Caco-2 (cell line): ENCODE measurements at regions of chr11 and their contacts with region 1.

Region 1: GRCh38 chr11:85854557-85855340 is 434 bp upstream of the CCDC83 start:
- DNase-seq: peak; percentile 97 to 99
- H3K4me3 ChIP-seq: peak overlapping the region; percentile 75
- H3K4me3 Mint-ChIP-seq: peak overlapping the region; percentile 83
- H3K27ac Mint-ChIP-seq: peak overlapping the region; percentile 87
- H3K4me1 ChIP-seq: peaks cover 5% of the 10 kb centered on the region
- H3K4me1 Mint-ChIP-seq: peaks cover 16% of the 10 kb centered on the region
- H3K27me3 ChIP-seq: no peaks in the 10 kb centered on the region
- H3K27me3 Mint-ChIP-seq: no peaks in the 10 kb centered on the region
- CTCF ChIP-seq: peak; percentile 95 to 98

Region 2: GRCh38 chr11:85540635-85541205 is 314.0 kb before region 1 on chr11:
- CTCF ChIA-PET with region 1: no interaction called
- POLR2A ChIA-PET with region 1: no interaction called
- intact Hi-C with region 1: no loop called
- DNase-seq: no peak
- H3K4me3 ChIP-seq: no peak overlapping the region
- H3K4me3 Mint-ChIP-seq: no peak overlapping the region
- H3K27ac Mint-ChIP-seq: no peak overlapping the region
- H3K4me1 ChIP-seq: no peaks in the 10 kb centered on the region
- H3K4me1 Mint-ChIP-seq: no peaks in the 10 kb centered on the region
- H3K27me3 ChIP-seq: no peaks in the 10 kb centered on the region
- H3K27me3 Mint-ChIP-seq: no peaks in the 10 kb centered on the region
- CTCF ChIP-seq: no peak

Region 3: GRCh38 chr11:85694386-85694980 is 160.3 kb before region 1 on chr11:
- CTCF ChIA-PET with region 1: no interaction called
- POLR2A ChIA-PET with region 1: no interaction called
- intact Hi-C with region 1: loop called (anchors 1 kb)
- DNase-seq: peak in 1 of 2 experiments; percentile 59
- H3K4me3 ChIP-seq: no peak overlapping the region
- H3K4me3 Mint-ChIP-seq: no peak overlapping the region
- H3K27ac Mint-ChIP-seq: no peak overlapping the region
- H3K4me1 ChIP-seq: no peaks in the 10 kb centered on the region
- H3K4me1 Mint-ChIP-seq: no peaks in the 10 kb centered on the region
- H3K27me3 ChIP-seq: no peaks in the 10 kb centered on the region
- H3K27me3 Mint-ChIP-seq: no peaks in the 10 kb centered on the region
- CTCF ChIP-seq: peak; percentile 79 to 85

Region 4: GRCh38 chr11:85930879-85931366 is 76.2 kb after region 1 on chr11:
- CTCF ChIA-PET with region 1: interaction called, 10 read pairs
- POLR2A ChIA-PET with region 1: no interaction called
- intact Hi-C with region 1: loop called (anchors 2 kb)
- DNase-seq: peak; percentile 74 to 87
- H3K4me3 ChIP-seq: no peak overlapping the region
- H3K4me3 Mint-ChIP-seq: no peak overlapping the region
- H3K27ac Mint-ChIP-seq: peak overlapping the region; percentile 46
- H3K4me1 ChIP-seq: peaks cover 31% of the 10 kb centered on the region
- H3K4me1 Mint-ChIP-seq: peaks cover 29% of the 10 kb centered on the region
- H3K27me3 ChIP-seq: no peaks in the 10 kb centered on the region
- H3K27me3 Mint-ChIP-seq: no peaks in the 10 kb centered on the region
- CTCF ChIP-seq: no peak

Region 5: DNA sequence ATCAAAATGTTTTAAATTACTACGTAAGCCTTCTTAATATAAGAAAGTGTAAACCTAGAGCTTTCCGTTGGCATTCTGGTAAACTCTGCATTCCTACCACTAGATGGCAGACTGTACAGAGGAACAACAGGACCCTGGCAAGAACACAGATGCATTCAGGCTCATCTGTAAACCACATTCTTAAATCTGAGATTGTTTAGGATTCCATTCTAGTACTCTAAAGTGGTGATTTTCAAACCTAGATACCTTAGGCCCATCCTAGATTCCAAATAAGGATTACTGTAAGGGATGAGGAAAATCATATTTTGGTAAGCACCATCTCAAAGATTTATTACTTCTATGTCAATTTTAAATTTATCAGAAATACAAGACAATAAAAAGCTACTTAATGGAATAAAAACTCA is 187.2 kb after region 1 on chr11:
- CTCF ChIA-PET with region 1: no interaction called
- POLR2A ChIA-PET with region 1: no interaction called
- intact Hi-C with region 1: loop called (anchors 1 kb)
- DNase-seq: peak; percentile 86 to 91
- H3K4me3 ChIP-seq: no peak overlapping the region
- H3K4me3 Mint-ChIP-seq: no peak overlapping the region
- H3K27ac Mint-ChIP-seq: no peak overlapping the region
- H3K4me1 ChIP-seq: peaks cover 50% of the 10 kb centered on the region
- H3K4me1 Mint-ChIP-seq: peaks cover 51% of the 10 kb centered on the region
- H3K27me3 ChIP-seq: no peaks in the 10 kb centered on the region
- H3K27me3 Mint-ChIP-seq: no peaks in the 10 kb centered on the region
- CTCF ChIP-seq: peak; percentile 97 to 99

Region 6: GRCh38 chr11:86193297-86194095 is 338.7 kb after region 1 on chr11:
- CTCF ChIA-PET with region 1: interaction called, 15 read pairs
- POLR2A ChIA-PET with region 1: no interaction called
- intact Hi-C with region 1: loop called (anchors 1 kb)
- DNase-seq: peak; percentile 84 to 86
- H3K4me3 ChIP-seq: no peak overlapping the region
- H3K4me3 Mint-ChIP-seq: peak overlapping the region; percentile 70
- H3K27ac Mint-ChIP-seq: peak overlapping the region; percentile 54
- H3K4me1 ChIP-seq: peaks cover 48% of the 10 kb centered on the region
- H3K4me1 Mint-ChIP-seq: peaks cover 27% of the 10 kb centered on the region
- H3K27me3 ChIP-seq: no peaks in the 10 kb centered on the region
- H3K27me3 Mint-ChIP-seq: no peaks in the 10 kb centered on the region
- CTCF ChIP-seq: peak; percentile 95

Region 7: DNA sequence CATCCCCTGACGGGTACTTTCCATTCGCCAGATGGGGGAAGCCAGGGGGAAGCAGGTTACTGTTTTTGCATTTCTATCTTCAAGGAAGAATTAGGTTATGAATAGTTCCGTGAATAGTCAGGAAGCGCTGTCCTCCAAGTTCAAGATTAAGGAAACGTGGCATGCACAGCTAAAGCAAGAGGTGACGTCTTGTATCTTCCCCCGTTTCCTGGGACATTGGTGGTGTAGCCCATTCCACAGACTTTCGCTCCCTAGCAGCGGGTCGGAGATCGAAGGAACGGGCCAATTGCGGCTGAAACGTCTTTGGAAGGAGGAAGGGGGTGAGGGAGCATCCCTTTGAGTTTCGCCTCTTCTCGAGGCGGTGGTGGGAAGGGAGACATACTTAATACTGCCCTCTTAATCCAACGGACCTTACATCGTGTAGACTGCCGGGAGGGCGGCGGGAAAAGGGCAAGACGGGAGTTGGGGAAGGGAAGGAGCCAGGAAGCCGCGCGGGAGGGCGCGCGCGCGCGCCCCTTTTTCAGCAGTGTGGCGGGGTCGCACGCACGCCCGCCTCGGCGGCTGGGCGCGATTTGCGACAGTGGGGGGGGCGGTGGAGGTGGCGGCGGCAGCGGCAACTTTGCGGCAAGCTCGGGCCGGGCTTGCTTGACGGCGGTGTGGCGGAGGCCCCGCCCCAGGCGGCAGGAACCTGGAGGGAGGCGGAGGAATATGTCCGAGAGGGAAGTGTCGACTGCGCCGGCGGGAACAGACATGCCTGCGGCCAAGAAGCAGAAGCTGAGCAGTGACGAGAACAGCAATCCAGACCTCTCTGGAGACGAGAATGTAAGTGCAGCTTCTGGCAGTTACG is 390.0 kb after region 1 on chr11 and contains the start of gene EED:
- CTCF ChIA-PET with region 1: interaction called, 7 read pairs
- POLR2A ChIA-PET with region 1: interaction called, 4 read pairs
- intact Hi-C with region 1: loop called (anchors 1 kb)
- DNase-seq: peak; percentile 99 to 100
- H3K4me3 ChIP-seq: peak within 1 kb of the TSS; percentile 74
- H3K4me3 Mint-ChIP-seq: no peak within 1 kb of the TSS
- H3K27ac Mint-ChIP-seq: no peak within 1 kb of the TSS
- H3K4me1 ChIP-seq: peaks cover 35% of the 10 kb centered on the region
- H3K4me1 Mint-ChIP-seq: peaks cover 45% of the 10 kb centered on the region
- H3K27me3 ChIP-seq: no peaks in the 10 kb centered on the region
- H3K27me3 Mint-ChIP-seq: no peaks in the 10 kb centered on the region
- CTCF ChIP-seq: no peak
- total RNA-seq, gene EED: 68.3 and 75.5 TPM in 2 replicates

Region 8: GRCh38 chr11:86418917-86419316 is 564.2 kb after region 1 on chr11:
- CTCF ChIA-PET with region 1: interaction called, 3 read pairs
- POLR2A ChIA-PET with region 1: no interaction called
- intact Hi-C with region 1: loop called (anchors 2 kb)
- DNase-seq: peak in 1 of 2 experiments; percentile 46
- H3K4me3 ChIP-seq: no peak overlapping the region
- H3K4me3 Mint-ChIP-seq: no peak overlapping the region
- H3K27ac Mint-ChIP-seq: no peak overlapping the region
- H3K4me1 ChIP-seq: peaks cover 19% of the 10 kb centered on the region
- H3K4me1 Mint-ChIP-seq: peaks cover 33% of the 10 kb centered on the region
- H3K27me3 ChIP-seq: no peaks in the 10 kb centered on the region
- H3K27me3 Mint-ChIP-seq: no peaks in the 10 kb centered on the region
- CTCF ChIP-seq: peak; percentile 31 to 61